ENCODE measurements at regions of chr13 and their contacts with region 1.

Region 1: GRCh38 chr13:51832471-51833152 is 12.4 kb downstream of the TMEM272 start:
- DNase-seq: no peak
- ATAC-seq: peak; percentile 92

Region 2: GRCh38 chr13:50873467-50873866 is 959.1 kb before region 1 on chr13:
- intact Hi-C with region 1: no loop called
- DNase-seq: no peak
- ATAC-seq: no peak

Region 3: DNA sequence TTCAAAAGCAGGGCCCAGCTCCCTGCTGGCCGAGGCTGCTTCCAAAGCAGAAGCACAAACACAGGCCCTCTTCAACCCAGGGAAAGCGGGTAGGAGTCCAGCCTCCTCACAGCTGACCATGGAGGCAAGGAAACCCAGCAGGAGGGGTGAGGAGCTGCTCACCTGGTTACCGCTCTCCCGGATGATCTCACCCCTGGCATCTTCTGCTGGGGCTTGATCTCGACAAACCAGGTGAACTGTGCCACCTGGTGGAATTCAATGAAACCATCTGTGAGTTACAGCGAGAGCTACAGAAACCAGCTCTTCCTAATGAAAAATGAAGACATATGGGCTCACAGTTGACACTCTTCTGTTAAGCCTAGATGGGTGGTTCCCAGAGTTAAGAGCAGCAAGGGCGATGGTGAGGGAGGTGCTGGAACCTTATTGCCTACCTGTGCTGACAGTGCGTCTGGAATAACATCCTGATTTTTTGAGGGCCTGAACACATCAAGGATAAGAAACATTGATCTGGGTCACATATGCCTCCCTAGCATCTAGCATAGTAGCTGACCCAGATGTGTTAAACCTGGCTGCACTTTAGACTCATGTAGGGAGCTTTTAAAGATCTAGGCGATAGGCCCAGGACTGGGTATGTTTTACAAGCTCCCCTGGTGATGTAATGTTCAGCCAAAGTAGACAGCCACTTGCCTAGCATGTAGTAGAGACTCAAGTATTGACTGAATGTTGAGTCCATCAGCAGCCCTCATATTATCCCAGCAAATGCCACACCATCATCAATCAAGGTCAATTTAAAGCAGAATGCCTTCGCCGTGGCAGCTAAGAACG is 34.7 kb before region 1 on chr13:
- intact Hi-C with region 1: no loop called
- DNase-seq: no peak
- ATAC-seq: peak; percentile 28

Region 4: GRCh38 chr13:51814825-51815650 is 17.6 kb before region 1 on chr13:
- intact Hi-C with region 1: loop called (anchors 2 kb)
- DNase-seq: peak; percentile 65
- ATAC-seq: peak; percentile 77

Region 5: DNA sequence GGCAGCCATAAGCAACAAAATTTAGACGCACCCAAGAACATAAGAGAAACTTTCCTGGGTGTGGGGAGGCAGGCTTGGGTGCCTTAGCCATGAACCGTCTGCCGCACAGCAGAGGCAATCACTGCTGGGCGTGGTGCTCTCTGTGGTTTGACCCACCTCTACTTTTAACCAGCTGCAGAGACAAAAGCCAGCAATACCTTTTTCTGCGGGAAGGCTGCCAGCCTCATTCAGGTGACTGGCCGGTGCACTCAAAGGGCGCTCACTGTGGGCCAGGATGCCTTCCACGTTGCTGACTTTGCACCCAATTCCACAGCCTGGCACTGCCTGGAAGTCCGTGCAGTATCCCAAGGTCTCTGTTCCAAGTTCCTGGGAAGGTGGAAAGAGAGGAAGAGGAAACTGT is 109.6 kb after region 1 on chr13:
- intact Hi-C with region 1: no loop called
- DNase-seq: no peak
- ATAC-seq: no peak

Measured in Right ventricle myocardium superior (tissue), 1 donor.